ENCODE measurements at regions of chr20 and their contacts with region 1.

Region 1: DNA sequence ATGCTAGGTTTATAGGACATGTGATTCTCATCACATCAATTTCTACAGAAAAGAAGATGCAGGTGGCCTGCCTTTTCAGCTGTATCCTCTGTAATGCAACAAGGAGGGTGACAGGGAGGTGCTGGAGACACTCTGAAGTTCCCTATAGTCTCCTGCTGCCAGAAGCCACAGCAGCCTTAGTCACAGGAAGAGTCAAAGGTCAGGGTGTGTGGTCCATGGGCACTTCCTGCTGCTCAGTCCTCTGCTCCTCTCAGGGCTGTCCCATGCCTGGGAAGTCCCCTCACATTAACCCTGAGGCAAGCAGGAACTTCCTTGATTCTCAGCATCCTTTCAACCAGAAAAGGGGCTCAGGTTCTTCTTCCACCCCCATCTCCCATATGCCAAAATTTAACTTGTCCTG is 144.8 kb upstream of the FOXA2 start:
- DNase-seq: peak in 1 of 2 experiments; percentile 36
- ATAC-seq: peak; percentile 55 to 57; a peak in 5 of 6 replicates
- H3K4me3 ChIP-seq: no peak overlapping the region
- H3K27ac ChIP-seq: peak overlapping the region; percentile 34 to 70; a peak in 5 of 6 replicates
- H3K4me1 ChIP-seq: peaks cover 30% of the 10 kb centered on the region
- CTCF ChIP-seq: no peak
- EP300 ChIP-seq: no peak
- POLR2A ChIP-seq: no peak
- RAD21 ChIP-seq: no peak

Region 2: DNA sequence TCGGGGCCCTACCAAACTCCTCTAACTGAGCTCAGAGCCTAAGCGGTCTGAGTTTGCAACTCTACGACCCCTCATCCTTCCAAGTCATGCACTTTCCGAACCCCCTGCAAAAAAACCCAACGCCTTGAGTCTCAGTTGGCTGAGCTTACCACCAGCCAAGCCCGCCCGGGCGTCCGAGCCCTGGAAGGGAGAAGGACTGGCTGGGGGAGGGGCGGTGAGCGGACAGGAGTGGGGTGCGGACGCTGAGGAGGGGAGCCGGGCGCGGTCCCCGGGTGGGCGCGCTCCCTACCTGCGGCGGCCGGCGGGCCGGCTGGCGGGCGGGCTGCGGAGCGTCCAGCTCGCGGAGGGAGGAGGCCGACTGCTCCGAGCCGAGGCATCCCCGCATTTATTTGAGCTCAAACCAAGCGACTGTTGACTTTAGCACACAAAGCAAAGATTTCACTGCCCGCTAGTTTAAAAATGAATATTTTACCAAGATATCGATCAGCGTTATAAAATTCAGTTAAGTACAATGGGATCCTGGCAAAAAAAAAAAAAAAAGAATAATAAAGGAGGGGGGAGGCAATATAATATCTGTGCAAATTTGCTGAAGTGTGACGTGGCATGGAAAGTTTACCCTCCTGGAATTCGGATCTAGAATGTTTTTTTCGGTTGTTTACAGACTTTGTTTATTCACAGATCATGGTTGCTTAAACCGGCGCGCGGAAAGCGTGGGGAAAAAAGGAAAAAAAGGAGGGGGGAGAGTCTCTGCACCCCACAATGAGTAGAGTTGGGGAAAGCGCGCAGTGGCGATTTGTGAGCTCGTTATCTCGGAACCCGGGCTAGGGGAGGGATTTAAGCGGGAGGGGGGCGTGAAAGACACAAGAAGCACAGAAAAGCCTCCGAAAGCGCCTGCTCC is 150.7 kb before region 1 on chr20:
- CTCF ChIA-PET with region 1: no interaction called
- POLR2A ChIA-PET with region 1: no interaction called
- DNase-seq: peak in 1 of 2 experiments; percentile 41
- ATAC-seq: peak in 1 of 2 experiments; percentile 46; a peak in 3 of 6 replicates
- H3K4me3 ChIP-seq: peak overlapping the region; percentile 50
- H3K27ac ChIP-seq: peak overlapping the region; percentile 75 to 95
- H3K4me1 ChIP-seq: peaks cover 58% of the 10 kb centered on the region
- CTCF ChIP-seq: no peak
- EP300 ChIP-seq: no peak
- POLR2A ChIP-seq: no peak
- RAD21 ChIP-seq: peak in 1 of 2 experiments; percentile 7; a peak in 1 of 5 replicates

Region 3: GRCh38 chr20:22630701-22631100 is 98.5 kb before region 1 on chr20:
- CTCF ChIA-PET with region 1: no interaction called
- POLR2A ChIA-PET with region 1: no interaction called
- DNase-seq: no peak
- ATAC-seq: no peak
- H3K4me3 ChIP-seq: no peak overlapping the region
- H3K27ac ChIP-seq: no peak overlapping the region
- H3K4me1 ChIP-seq: no peaks in the 10 kb centered on the region
- CTCF ChIP-seq: no peak
- EP300 ChIP-seq: no peak
- POLR2A ChIP-seq: no peak
- RAD21 ChIP-seq: no peak

Region 4: GRCh38 chr20:22680031-22680739 is 49.0 kb before region 1 on chr20:
- CTCF ChIA-PET with region 1: no interaction called
- POLR2A ChIA-PET with region 1: no interaction called
- DNase-seq: no peak
- ATAC-seq: no peak
- H3K4me3 ChIP-seq: no peak overlapping the region
- H3K27ac ChIP-seq: peak overlapping the region in 1 of 2 experiments; percentile 41; a peak in 2 of 6 replicates
- H3K4me1 ChIP-seq: peaks cover 19% of the 10 kb centered on the region
- CTCF ChIP-seq: no peak
- EP300 ChIP-seq: no peak
- POLR2A ChIP-seq: no peak
- RAD21 ChIP-seq: no peak

Region 5: GRCh38 chr20:22716821-22717351 is 12.3 kb before region 1 on chr20:
- CTCF ChIA-PET with region 1: interaction called, 15 read pairs
- POLR2A ChIA-PET with region 1: no interaction called
- DNase-seq: peak; percentile 34 to 56
- ATAC-seq: peak; percentile 70 to 77
- H3K4me3 ChIP-seq: no peak overlapping the region
- H3K27ac ChIP-seq: peak overlapping the region; percentile 80 to 85
- H3K4me1 ChIP-seq: peaks cover 50% of the 10 kb centered on the region
- CTCF ChIP-seq: no peak
- EP300 ChIP-seq: no peak; a peak in 1 of 5 replicates
- POLR2A ChIP-seq: no peak
- RAD21 ChIP-seq: 0 out of 5 replicates have a peak, but pooled peaks of 1 of the 2 experiments have one; percentile 7

Region 6: DNA sequence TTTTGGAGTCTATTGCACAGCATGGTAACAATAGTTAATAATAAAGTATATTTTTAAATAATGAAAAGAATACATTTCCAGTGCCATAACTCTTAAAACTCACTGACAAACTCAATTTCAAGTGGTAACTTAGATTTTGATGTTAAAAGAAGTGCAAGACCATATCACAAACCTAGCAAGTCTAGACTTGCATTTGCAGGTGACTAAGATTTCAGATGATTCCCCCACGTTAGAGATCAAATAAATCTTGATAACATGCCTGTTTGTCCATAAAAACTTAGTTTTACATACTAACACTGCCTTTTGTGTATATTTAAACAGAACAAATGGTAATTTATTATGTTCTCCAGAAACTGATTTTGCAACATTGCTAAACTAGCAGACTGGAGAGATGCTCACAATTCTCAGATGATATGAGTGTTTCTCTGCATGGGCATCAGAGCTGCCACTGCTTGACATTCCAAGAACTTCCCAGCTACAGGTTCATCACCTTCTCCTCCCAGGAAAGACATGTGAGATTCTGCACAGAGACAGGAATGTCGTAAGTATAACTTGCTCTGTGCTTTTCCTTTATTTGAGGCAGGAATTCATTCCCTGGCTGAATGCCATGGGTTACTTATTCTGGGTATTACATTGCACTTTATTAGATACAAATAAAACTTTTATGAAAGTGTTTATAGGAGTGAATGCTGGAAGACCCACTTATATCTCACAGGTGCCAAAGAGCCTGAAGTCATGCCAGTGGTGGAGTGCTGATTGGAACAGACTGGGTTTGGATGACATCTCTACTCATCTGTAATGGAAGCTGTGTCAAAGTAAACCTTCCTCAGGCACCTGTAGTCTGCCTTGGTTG is 15.4 kb after region 1 on chr20:
- CTCF ChIA-PET with region 1: interaction called, 15 read pairs
- POLR2A ChIA-PET with region 1: no interaction called
- DNase-seq: no peak
- ATAC-seq: no peak
- H3K4me3 ChIP-seq: no peak overlapping the region
- H3K27ac ChIP-seq: peak overlapping the region in 1 of 2 experiments; percentile 4; a peak in 1 of 6 replicates
- H3K4me1 ChIP-seq: no peaks in the 10 kb centered on the region
- CTCF ChIP-seq: no peak
- EP300 ChIP-seq: no peak
- POLR2A ChIP-seq: no peak
- RAD21 ChIP-seq: no peak

Region 7: GRCh38 chr20:22757424-22758183 is 28.4 kb after region 1 on chr20:
- CTCF ChIA-PET with region 1: interaction called, 13 read pairs
- POLR2A ChIA-PET with region 1: no interaction called
- DNase-seq: no peak
- ATAC-seq: no peak
- H3K4me3 ChIP-seq: no peak overlapping the region
- H3K27ac ChIP-seq: peak overlapping the region in 1 of 2 experiments; percentile 65; a peak in 3 of 6 replicates
- H3K4me1 ChIP-seq: peaks cover 14% of the 10 kb centered on the region
- CTCF ChIP-seq: no peak
- EP300 ChIP-seq: no peak
- POLR2A ChIP-seq: no peak
- RAD21 ChIP-seq: no peak

Measured in A549 (cell line).